GM12878 (cell line): ENCODE measurements at regions of chr1 and their contacts with region 1.

Region 1: DNA sequence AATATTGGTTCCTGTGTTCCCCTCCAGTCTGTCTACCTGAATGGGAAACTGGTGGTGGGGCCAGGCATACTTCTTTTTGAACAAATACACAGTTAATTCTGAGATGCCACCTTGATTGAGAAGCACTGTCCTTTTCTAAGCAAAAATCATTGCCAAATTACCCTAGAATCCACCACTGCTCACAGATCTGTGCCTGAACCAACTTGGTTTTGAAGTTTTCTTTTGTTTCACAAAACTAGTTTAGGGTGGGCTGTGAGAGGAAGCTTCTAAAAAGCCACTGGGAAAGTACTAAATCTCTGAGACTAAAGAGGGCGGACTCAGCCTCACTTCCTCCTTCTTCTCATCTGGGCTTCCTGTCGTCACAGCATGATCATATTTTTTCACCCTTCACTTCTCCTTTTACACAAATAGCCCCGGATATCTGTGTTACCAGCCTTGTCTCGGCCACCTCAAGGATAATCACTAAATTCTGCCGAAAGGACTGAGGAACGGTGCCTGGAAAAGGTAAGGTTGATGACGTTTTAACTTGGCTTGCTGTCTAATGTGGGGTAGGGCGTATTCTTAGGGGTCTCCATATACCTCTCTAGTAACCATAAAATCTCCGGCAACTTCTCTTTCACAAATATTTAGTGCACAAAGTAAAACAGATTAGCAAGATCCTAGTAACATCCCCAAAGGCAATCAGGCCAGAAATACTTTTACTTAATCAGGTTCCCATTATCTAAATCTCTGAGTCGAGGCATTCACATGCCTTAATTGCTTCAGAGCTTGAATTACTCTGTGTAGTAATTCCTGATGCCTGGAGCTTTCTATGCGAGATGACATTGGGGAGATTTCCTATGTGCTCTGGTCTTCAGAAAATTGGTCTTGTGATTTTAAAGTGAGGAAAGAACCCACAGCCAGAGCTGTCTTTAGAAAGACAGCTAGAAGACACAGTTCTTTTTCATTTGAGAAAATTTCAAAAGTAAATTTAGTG is at the start of gene CD53:
- DNase-seq: peak; percentile 78
- ATAC-seq: peak; percentile 65
- H3K4me3 ChIP-seq: peak within 1 kb of the TSS; percentile 88
- H3K27ac ChIP-seq: peak within 1 kb of the TSS; percentile 98
- H3K4me1 ChIP-seq: peaks cover 6% of the 10 kb centered on the region; the same call in 1 of the 2 replicates
- H3K27me3 ChIP-seq: no peaks in the 10 kb centered on the region
- CTCF ChIP-seq: no peak
- EP300 ChIP-seq: peak in 1 of 2 experiments; percentile 63; a peak in 2 of 4 replicates
- POLR2A ChIP-seq: peak; percentile 69
- RAD21 ChIP-seq: no peak
- polyA plus RNA-seq, gene CD53: 698 to 917 TPM

Region 2: DNA sequence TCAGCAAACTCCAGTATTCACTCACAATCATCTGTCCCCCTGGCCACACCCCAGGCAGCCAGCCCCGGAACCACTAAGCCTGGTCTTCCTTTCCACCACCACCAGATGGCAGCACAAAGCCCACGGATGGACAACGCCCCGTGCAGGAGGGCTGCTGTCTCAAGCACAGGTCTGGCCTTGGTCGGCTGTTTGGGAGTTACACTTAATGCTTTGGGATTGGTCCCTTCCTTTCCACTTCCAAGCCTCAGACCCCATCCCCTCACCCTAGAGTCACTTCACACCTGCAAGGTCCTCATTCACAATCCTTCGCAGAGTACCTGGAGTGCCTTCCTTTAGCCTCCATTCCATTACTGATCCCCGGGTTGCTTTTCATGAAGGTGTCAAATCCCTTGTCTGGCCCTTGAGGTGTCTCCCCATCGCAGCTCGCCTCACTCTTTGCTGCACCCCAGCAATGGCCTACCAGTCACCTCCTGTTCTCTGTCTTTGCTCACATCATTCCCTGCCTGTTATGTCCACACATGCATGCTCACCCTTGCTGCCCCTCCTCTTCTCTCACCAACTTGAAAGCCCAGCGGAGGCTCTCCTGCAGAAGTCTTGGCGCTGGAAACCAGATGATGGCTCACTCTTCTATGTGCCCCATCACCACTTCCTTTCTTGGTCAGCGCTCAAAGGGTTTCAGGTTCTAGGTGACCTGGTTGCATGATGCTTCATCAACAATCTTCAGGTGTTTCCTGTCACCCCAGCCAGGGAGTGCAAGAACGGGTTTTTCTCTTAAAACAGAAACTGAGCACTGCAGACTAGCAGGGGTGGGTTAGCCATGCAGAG is 242.0 kb before region 1 on chr1:
- CTCF ChIA-PET with region 1: no interaction called
- POLR2A ChIA-PET with region 1: no interaction called
- RAD21 ChIA-PET with region 1: interaction called, 3 read pairs
- SMC1A ChIA-PET with region 1: interaction called, 3 read pairs
- in situ Hi-C with region 1: no loop called
- intact Hi-C with region 1: loop called (anchors 10 kb)
- DNase-seq: peak; percentile 84
- ATAC-seq: peak; percentile 85
- H3K4me3 ChIP-seq: peak overlapping the region; percentile 10; the same call in 1 of the 2 replicates
- H3K27ac ChIP-seq: peak overlapping the region; percentile 66
- H3K4me1 ChIP-seq: peaks cover 67% of the 10 kb centered on the region
- H3K27me3 ChIP-seq: no peaks in the 10 kb centered on the region
- CTCF ChIP-seq: peak; percentile 84 to 89 (median 86)
- EP300 ChIP-seq: no peak
- POLR2A ChIP-seq: no peak
- RAD21 ChIP-seq: peak; percentile 94

Region 3: DNA sequence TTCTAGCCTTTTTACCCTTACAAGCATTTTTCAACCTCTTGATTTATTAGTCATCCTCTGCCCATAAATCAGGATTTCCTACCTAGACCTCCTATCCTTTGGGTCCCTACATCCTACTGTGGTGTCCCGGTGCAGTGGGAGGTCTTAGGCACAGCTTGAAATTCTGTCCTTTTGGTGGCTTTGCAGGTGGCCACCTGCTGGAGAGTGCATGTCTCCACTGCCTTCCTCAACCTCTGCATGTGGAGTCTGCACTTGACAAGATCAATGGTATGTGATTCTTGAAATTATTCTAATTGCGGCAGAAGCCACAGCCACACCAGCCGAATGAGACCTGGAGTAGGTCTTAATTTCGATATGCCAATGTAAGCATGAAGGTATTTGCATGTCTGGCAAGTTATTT is 186.8 kb before region 1 on chr1:
- CTCF ChIA-PET with region 1: no interaction called
- POLR2A ChIA-PET with region 1: no interaction called
- RAD21 ChIA-PET with region 1: no interaction called
- SMC1A ChIA-PET with region 1: no interaction called
- in situ Hi-C with region 1: no loop called
- intact Hi-C with region 1: no loop called
- DNase-seq: no peak
- ATAC-seq: peak; percentile 73
- H3K4me3 ChIP-seq: no peak overlapping the region
- H3K27ac ChIP-seq: no peak overlapping the region
- H3K4me1 ChIP-seq: no peaks in the 10 kb centered on the region
- H3K27me3 ChIP-seq: no peaks in the 10 kb centered on the region
- CTCF ChIP-seq: peak in 2 of 3 experiments; percentile 27 to 33; a peak in 4 of 6 replicates
- EP300 ChIP-seq: no peak
- POLR2A ChIP-seq: no peak
- RAD21 ChIP-seq: peak; percentile 21; the same call in 1 of the 2 replicates

Region 4: DNA sequence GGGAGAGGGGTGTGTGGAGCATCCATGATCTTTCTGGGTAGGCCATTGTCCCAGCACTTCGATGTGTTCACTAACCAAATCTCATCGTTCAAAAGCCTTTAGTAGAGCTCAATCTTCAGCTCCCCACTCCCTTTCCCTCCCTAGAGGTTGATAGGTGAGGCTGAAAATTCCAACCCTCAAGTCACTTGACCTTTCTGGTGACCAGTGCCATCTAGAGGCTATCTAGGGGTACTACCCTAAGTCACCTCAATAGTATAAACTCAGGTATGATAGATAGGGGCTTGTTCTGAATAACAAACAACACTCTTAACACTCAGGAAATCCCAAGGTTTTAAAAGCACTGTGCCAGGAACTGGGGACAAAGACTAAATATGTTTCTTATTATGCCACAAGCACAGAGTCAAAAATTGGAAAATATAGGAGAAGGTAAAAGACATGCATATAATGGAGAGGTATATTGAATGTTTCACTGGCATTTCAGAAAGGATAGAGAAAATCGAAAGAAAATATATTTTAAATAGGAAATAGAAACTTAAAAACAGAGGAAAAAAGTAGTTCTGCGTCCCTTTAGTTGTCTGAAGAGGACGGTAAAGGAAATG is 43.0 kb before region 1 on chr1:
- CTCF ChIA-PET with region 1: interaction called, 10 read pairs
- POLR2A ChIA-PET with region 1: no interaction called
- RAD21 ChIA-PET with region 1: no interaction called
- SMC1A ChIA-PET with region 1: interaction called, 6 read pairs
- in situ Hi-C with region 1: no loop called
- intact Hi-C with region 1: no loop called
- DNase-seq: peak; percentile 37
- ATAC-seq: peak; percentile 92
- H3K4me3 ChIP-seq: no peak overlapping the region
- H3K27ac ChIP-seq: no peak overlapping the region
- H3K4me1 ChIP-seq: no peaks in the 10 kb centered on the region
- H3K27me3 ChIP-seq: no peaks in the 10 kb centered on the region
- CTCF ChIP-seq: peak; percentile 65 to 89 (median 88)
- EP300 ChIP-seq: no peak
- POLR2A ChIP-seq: no peak
- RAD21 ChIP-seq: peak; percentile 80

Region 5: DNA sequence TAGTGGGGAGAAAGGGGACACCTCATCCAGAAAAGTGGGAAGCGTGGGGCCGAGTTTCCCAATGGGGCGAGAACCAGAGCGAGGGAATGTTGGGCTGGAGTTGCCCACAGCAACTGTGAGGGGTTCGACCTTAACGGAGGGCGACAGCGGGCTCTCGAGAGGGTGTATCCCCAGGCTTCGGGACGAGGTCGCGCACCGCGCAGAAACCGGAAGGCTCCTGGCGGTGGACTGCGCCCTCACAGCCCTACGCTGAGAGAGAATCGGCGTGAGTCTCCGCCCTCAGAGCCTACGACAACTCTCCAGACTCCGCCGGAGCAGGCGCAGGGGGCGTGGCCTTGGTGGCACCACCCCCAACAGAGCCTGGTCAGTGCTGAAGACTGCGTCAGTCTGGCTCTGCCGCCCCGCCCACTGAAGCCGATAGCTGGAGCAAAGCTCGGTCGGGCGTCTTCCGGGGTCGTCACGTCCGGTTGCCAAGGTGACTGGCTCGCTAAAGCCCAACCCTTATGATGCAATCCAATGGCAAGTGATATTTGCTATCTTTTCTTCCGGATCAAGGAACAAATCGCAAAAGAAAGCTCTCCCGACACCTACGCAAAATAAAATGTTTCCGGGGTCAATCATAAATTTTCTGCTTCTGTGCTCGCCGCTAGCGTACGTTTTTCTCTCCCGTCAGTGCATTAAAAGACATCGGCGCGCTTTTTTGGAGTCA is 90.8 kb after region 1 on chr1 and contains the start of gene LRIF1:
- CTCF ChIA-PET with region 1: interaction called, 3 read pairs
- POLR2A ChIA-PET with region 1: interaction called, 6 read pairs
- RAD21 ChIA-PET with region 1: interaction called, 4 read pairs
- SMC1A ChIA-PET with region 1: interaction called, 6 read pairs
- in situ Hi-C with region 1: no loop called
- intact Hi-C with region 1: loop called (anchors 2 kb)
- DNase-seq: peak; percentile 99
- ATAC-seq: peak; percentile 98
- H3K4me3 ChIP-seq: peak within 1 kb of the TSS; percentile 75
- H3K27ac ChIP-seq: peak within 1 kb of the TSS; percentile 91
- H3K4me1 ChIP-seq: 0 out of 2 replicates have a peak, but pooled peaks cover 6% of the 10 kb centered on the region
- H3K27me3 ChIP-seq: no peaks in the 10 kb centered on the region
- CTCF ChIP-seq: peak; percentile 25 to 51 (median 39); a peak in 4 of 6 replicates
- EP300 ChIP-seq: no peak
- POLR2A ChIP-seq: peak; percentile 100
- RAD21 ChIP-seq: no peak
- polyA plus RNA-seq, gene LRIF1: 15.4 to 16.1 TPM

Region 6: DNA sequence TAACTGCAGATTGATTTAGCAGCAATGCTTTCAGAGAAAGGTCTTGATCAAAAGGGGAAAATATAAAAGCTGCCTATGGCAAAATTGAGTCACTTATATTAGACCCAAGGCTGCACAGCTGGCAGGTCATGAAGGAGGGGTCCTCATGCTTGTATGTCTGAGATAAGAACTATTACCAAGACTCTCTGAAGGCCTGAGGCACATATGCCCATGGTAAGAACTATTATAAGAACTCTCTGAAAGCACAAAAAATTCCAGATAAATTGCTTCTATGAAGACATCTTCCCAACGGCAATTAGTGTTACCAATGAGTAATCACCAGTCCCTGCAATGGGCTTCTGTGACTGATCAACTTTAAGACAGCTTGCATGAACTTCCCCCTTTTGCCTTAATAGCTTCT is 133.5 kb after region 1 on chr1:
- CTCF ChIA-PET with region 1: no interaction called
- POLR2A ChIA-PET with region 1: no interaction called
- RAD21 ChIA-PET with region 1: no interaction called
- SMC1A ChIA-PET with region 1: no interaction called
- in situ Hi-C with region 1: no loop called
- intact Hi-C with region 1: no loop called
- DNase-seq: no peak
- ATAC-seq: no peak
- H3K4me3 ChIP-seq: no peak overlapping the region
- H3K27ac ChIP-seq: no peak overlapping the region
- H3K4me1 ChIP-seq: no peaks in the 10 kb centered on the region
- H3K27me3 ChIP-seq: no peaks in the 10 kb centered on the region
- CTCF ChIP-seq: no peak
- EP300 ChIP-seq: no peak
- POLR2A ChIP-seq: no peak
- RAD21 ChIP-seq: no peak

Region 7: DNA sequence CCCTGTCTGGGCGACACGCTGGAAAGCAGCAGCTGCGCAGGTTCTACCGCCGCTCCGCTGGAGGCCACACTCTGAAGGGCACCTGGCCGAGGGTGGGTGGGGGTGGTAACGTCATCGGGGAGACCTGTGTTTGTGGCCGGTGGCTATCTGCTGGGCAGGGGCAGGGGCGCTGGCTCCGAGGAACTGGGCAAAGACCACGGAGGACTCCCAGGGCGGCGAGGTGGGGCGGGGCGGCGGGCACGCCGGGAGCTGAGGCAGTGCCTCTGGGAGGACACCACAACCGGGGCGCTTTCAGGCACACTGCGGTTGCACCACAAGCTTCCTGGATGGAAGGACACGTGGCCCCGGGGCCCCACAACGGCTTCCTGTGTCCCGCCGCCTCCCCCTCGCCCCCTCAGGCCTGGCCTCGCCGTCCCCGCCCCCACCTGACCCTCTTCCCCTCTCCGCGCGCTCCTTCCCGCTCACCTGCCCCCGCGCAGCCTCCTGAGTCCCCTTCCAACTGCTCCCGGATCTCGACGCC is 330.7 kb after region 1 on chr1:
- CTCF ChIA-PET with region 1: no interaction called
- POLR2A ChIA-PET with region 1: interaction called, 7 read pairs
- RAD21 ChIA-PET with region 1: interaction called, 3 read pairs
- SMC1A ChIA-PET with region 1: interaction called, 4 read pairs
- in situ Hi-C with region 1: no loop called
- intact Hi-C with region 1: loop called (anchors 5 kb)
- DNase-seq: peak; percentile 77
- ATAC-seq: peak; percentile 57
- H3K4me3 ChIP-seq: peak overlapping the region; percentile 87
- H3K27ac ChIP-seq: peak overlapping the region; percentile 92
- H3K4me1 ChIP-seq: peaks cover 39% of the 10 kb centered on the region
- H3K27me3 ChIP-seq: no peaks in the 10 kb centered on the region
- CTCF ChIP-seq: no peak
- EP300 ChIP-seq: peak; percentile 30 to 69; a peak in 3 of 4 replicates
- POLR2A ChIP-seq: peak; percentile 72; the same call in 1 of the 2 replicates
- RAD21 ChIP-seq: 0 out of 2 replicates have a peak, but pooled peaks have one; percentile 2